Activated CD4-positive, alpha-beta memory T cell treated with anti-CD3 and anti-CD28 coated beads, Interleukin-2, amount 10 ng/mL, durations not matched to agents 7 days and 5 days (primary cell): ENCODE measurements at regions of chr11 and their contacts with region 1.

Region 1: GRCh38 chr11:14578541-14578956 is 58.4 kb upstream of the PSMA1 start:
- DNase-seq: peak; percentile 74
- H3K4me3 Mint-ChIP-seq: peak overlapping the region; percentile 42
- H3K27ac Mint-ChIP-seq: peak overlapping the region; percentile 91
- H3K4me1 Mint-ChIP-seq: peaks cover 43% of the 10 kb centered on the region
- H3K27me3 Mint-ChIP-seq: no peaks in the 10 kb centered on the region

Region 2: DNA sequence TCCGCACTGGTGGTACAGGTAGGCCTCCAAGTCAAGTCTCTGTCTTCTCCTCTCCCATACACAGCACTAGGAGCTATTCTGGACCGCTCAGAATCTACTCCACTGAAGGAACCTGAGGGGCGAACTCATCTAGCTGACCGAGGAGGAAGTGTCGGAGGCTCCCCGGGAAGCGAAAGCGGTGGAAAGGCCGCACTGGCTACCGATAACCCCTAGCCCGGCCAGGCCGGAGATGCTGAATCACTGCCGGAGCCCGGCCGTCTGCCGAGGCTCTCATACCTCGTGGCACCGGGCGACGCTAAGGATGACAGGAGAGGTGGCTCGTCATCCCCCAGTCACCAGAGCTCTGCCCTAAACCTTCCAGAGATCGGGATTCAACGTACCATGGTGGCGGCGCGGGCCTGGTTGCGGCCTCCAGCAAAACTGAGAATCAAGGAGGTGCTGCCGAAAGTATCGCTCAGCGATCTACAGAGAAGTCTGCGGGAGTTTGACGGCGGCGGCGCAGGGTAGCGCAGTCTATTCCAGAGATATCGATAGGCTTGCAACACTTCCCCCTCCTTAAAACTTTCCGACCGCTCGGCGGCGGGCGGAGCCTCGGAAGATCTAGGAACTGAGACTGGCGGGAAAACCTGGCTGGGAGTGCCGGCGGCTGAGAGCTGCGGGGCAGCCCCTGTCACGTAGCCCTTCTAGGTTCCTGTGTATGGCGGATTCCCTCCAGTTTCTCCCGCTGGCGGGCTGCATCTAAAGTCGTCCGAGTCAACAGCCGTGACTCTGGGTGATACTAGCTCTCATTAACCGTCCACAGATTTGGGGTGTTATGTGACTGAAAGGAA is 58.4 kb before region 1 on chr11 and contains the start of gene PSMA1:
- CTCF ChIA-PET with region 1: interaction called, 4 read pairs
- POLR2A ChIA-PET with region 1: interaction called, 33 read pairs
- DNase-seq: peak; percentile 95
- H3K4me3 Mint-ChIP-seq: peak within 1 kb of the TSS; percentile 92
- H3K27ac Mint-ChIP-seq: peak within 1 kb of the TSS; percentile 94
- H3K4me1 Mint-ChIP-seq: peaks cover 25% of the 10 kb centered on the region
- H3K27me3 Mint-ChIP-seq: no peaks in the 10 kb centered on the region
- total RNA-seq, gene PSMA1: 232 to 238 TPM

Region 3: DNA sequence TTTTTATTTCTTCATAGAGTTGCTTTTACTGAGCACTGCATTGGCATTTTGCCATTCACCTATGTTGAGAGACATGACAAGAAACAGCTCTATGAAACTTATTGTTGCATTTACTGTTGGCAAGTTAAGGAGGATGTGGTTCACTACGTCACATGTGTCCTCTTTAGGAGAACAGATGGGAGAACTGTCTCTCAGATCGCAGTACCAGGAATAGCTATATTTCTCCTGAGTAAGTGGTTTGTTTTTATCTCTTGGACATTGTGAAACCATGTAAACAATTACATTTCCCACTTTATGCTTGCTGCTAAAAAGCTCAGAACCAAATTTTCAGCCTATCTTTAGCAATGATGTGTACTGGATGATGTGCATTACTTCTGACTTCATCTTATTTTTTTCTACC is 23.6 kb before region 1 on chr11:
- CTCF ChIA-PET with region 1: interaction called, 5 read pairs
- POLR2A ChIA-PET with region 1: interaction called, 32 read pairs
- DNase-seq: no peak
- H3K4me3 Mint-ChIP-seq: peak overlapping the region; percentile 2
- H3K27ac Mint-ChIP-seq: peak overlapping the region; percentile 85
- H3K4me1 Mint-ChIP-seq: peaks cover 50% of the 10 kb centered on the region
- H3K27me3 Mint-ChIP-seq: no peaks in the 10 kb centered on the region

Region 4: GRCh38 chr11:14593684-14594083 is 15.1 kb after region 1 on chr11:
- CTCF ChIA-PET with region 1: interaction called, 3 read pairs
- POLR2A ChIA-PET with region 1: interaction called, 10 read pairs
- DNase-seq: no peak
- H3K4me3 Mint-ChIP-seq: no peak overlapping the region
- H3K27ac Mint-ChIP-seq: no peak overlapping the region
- H3K4me1 Mint-ChIP-seq: peaks cover 39% of the 10 kb centered on the region
- H3K27me3 Mint-ChIP-seq: no peaks in the 10 kb centered on the region

Region 5: GRCh38 chr11:14672635-14673034 is 94.1 kb after region 1 on chr11:
- CTCF ChIA-PET with region 1: no interaction called
- POLR2A ChIA-PET with region 1: no interaction called
- DNase-seq: no peak
- H3K4me3 Mint-ChIP-seq: no peak overlapping the region
- H3K27ac Mint-ChIP-seq: no peak overlapping the region
- H3K4me1 Mint-ChIP-seq: peaks cover 7% of the 10 kb centered on the region
- H3K27me3 Mint-ChIP-seq: no peaks in the 10 kb centered on the region

Region 6: GRCh38 chr11:14751975-14752407 is 173.4 kb after region 1 on chr11:
- CTCF ChIA-PET with region 1: no interaction called
- POLR2A ChIA-PET with region 1: no interaction called
- DNase-seq: no peak
- H3K4me3 Mint-ChIP-seq: no peak overlapping the region
- H3K27ac Mint-ChIP-seq: no peak overlapping the region
- H3K4me1 Mint-ChIP-seq: peaks cover 36% of the 10 kb centered on the region
- H3K27me3 Mint-ChIP-seq: no peaks in the 10 kb centered on the region

Region 7: GRCh38 chr11:14764579-14765527 is 186.3 kb after region 1 on chr11:
- CTCF ChIA-PET with region 1: interaction called, 6 read pairs
- POLR2A ChIA-PET with region 1: interaction called, 50 read pairs
- DNase-seq: peak; percentile 47
- H3K4me3 Mint-ChIP-seq: peak overlapping the region; percentile 52
- H3K27ac Mint-ChIP-seq: no peak overlapping the region
- H3K4me1 Mint-ChIP-seq: peaks cover 34% of the 10 kb centered on the region
- H3K27me3 Mint-ChIP-seq: no peaks in the 10 kb centered on the region